Mammary epithelial cell (primary cell): ENCODE measurements at regions of chr1 and their contacts with region 1.

Region 1: DNA sequence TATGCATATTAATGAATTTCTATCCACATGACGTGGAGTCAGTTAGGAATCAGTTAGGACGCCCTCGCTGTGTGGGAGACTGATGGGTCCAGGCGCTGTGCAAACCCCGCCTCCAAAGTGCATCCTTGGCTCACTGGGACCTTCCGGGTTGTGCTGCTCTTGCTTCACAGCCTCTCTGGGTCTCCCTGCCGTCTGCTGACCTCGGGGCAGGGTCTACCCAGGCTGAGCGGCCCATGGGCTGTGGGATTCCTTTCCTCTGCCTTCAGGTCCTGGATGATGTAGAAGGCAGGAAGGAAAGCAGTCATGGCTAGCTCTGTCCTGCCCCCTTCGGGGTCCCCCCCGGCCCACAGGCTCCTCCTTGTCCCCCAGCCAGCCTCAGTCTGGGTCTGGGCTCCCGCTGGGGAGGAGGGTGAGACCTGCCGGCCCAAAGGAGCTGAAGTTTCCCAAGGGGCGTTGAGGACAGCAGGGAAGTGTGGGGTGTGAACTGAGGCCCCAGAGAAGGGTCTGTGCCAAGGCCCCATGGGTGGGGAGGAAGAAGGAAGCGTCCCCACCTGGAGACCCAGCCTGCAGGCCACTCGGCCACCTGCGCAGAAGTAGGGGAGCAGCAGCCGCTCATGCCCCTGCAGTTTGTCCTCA is 24.6 kb upstream of the CDK11A start:
- DNase-seq: no peak
- H3K4me3 ChIP-seq: no peak overlapping the region
- H3K27ac ChIP-seq: no peak overlapping the region
- H3K4me1 ChIP-seq: no peaks in the 10 kb centered on the region
- H3K27me3 ChIP-seq: no peaks in the 10 kb centered on the region
- CTCF ChIP-seq: no peak

Region 2: GRCh38 chr1:1703796-1704195 is 45.0 kb before region 1 on chr1:
- CTCF ChIA-PET with region 1: no interaction called
- dilution Hi-C with region 1: no loop called
- in situ Hi-C with region 1: no loop called
- intact Hi-C with region 1: loop called (anchors 10 kb)
- DNase-seq: no peak
- H3K4me3 ChIP-seq: no peak overlapping the region
- H3K27ac ChIP-seq: no peak overlapping the region
- H3K4me1 ChIP-seq: no peaks in the 10 kb centered on the region
- H3K27me3 ChIP-seq: no peaks in the 10 kb centered on the region
- CTCF ChIP-seq: no peak

Region 3: DNA sequence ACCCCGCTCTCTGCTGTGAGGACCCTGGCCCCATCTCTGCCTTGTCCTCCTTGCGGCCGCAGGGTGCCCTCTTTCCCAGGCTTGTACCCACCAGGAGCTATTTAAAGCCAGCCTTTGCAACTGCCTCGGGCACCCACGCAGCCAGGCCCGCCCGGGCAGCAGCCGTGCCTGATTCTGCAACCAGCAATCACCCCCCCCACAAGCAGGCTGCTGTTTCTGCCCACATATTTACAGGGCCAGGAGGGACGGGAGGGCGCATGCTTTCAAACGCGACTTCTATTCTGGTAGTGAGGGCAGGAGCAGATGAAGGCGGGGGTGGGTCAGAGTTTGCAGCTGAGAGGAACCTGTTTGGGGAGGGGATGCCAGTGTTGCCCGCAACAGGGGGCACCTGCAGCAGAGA is 283.9 kb after region 1 on chr1:
- CTCF ChIA-PET with region 1: no interaction called
- dilution Hi-C with region 1: no loop called
- in situ Hi-C with region 1: no loop called
- intact Hi-C with region 1: no loop called
- DNase-seq: no peak
- H3K4me3 ChIP-seq: no peak overlapping the region
- H3K27ac ChIP-seq: no peak overlapping the region
- H3K4me1 ChIP-seq: no peaks in the 10 kb centered on the region
- H3K27me3 ChIP-seq: peaks cover 2% of the 10 kb centered on the region
- CTCF ChIP-seq: no peak

Region 4: DNA sequence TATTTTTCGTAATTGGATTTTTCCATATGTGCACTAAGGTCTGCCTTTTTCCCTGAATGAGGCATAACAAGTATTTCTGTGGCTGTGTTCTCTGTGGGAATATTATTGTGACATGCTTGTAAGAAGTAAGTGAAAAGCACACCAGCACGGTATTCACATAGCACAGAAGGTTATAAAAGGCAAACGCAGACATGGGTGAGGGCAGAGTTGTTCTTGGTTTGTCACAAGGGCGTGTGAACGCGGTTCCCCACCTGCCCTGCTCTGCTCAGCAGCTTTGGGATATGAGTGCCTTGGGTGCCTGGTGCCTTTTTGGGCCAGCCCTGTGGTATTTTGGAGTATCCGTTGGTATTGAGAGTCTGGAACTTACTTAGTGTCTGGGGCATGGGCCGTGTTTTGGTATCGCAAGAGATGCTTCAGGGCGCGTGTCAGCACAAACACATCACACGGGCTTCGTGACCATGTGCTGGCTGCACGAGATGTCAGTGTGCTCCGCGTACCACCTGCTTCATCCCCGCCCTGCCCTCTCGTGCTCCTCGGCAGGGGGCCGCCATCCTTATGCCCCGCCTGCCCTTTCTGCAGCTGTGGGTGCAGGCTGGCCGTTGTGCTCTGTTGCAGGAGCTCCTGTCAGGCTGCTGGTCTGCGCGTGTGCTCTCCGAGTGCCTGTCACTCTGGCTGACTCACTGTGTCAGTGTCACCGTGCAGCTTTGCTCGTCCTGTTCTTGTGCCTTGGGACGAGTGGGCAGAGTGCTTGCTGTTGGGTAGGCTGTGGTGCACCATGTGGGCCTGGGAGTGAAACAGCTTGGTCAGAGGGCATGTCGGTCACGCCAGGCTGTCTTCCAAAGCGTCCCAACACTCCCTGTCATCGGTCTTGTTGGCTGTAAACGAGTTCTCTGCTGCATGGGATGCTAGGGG is 494.3 kb after region 1 on chr1:
- CTCF ChIA-PET with region 1: no interaction called
- dilution Hi-C with region 1: no loop called
- in situ Hi-C with region 1: no loop called
- intact Hi-C with region 1: no loop called
- DNase-seq: no peak
- H3K4me3 ChIP-seq: no peak overlapping the region
- H3K27ac ChIP-seq: no peak overlapping the region
- H3K4me1 ChIP-seq: peaks cover 39% of the 10 kb centered on the region
- H3K27me3 ChIP-seq: no peaks in the 10 kb centered on the region
- CTCF ChIP-seq: no peak

Region 5: GRCh38 chr1:2443277-2444137 is 694.7 kb after region 1 on chr1:
- CTCF ChIA-PET with region 1: no interaction called
- dilution Hi-C with region 1: no loop called
- in situ Hi-C with region 1: no loop called
- intact Hi-C with region 1: no loop called
- DNase-seq: no peak
- H3K4me3 ChIP-seq: no peak overlapping the region
- H3K27ac ChIP-seq: no peak overlapping the region
- H3K4me1 ChIP-seq: no peaks in the 10 kb centered on the region
- H3K27me3 ChIP-seq: no peaks in the 10 kb centered on the region
- CTCF ChIP-seq: no peak